ENCODE measurements at regions of chr10 and their contacts with region 1.

Region 1: GRCh38 chr10:126062131-126062981 is 166.0 kb downstream of the FANK1 start:
- DNase-seq: peak; percentile 95
- ATAC-seq: peak; percentile 66
- H3K4me3 ChIP-seq: peak overlapping the region; percentile 5; the same call in 1 of the 2 replicates
- H3K27ac ChIP-seq: peak overlapping the region; percentile 98
- H3K4me1 ChIP-seq: peaks cover 81% of the 10 kb centered on the region
- H3K27me3 ChIP-seq: no peaks in the 10 kb centered on the region
- CTCF ChIP-seq: no peak

Region 2: GRCh38 chr10:125844751-125845221 is 217.6 kb before region 1 on chr10:
- CTCF ChIA-PET with region 1: no interaction called
- POLR2A ChIA-PET with region 1: no interaction called
- intact Hi-C with region 1: no loop called
- DNase-seq: no peak
- ATAC-seq: no peak
- H3K4me3 ChIP-seq: no peak overlapping the region
- H3K27ac ChIP-seq: no peak overlapping the region
- H3K4me1 ChIP-seq: peaks cover 17% of the 10 kb centered on the region
- H3K27me3 ChIP-seq: no peaks in the 10 kb centered on the region
- CTCF ChIP-seq: no peak

Region 3: GRCh38 chr10:126013489-126014281 is 48.7 kb before region 1 on chr10:
- CTCF ChIA-PET with region 1: no interaction called
- POLR2A ChIA-PET with region 1: no interaction called
- intact Hi-C with region 1: loop called (anchors 2 kb)
- DNase-seq: peak; percentile 80
- ATAC-seq: peak; percentile 92
- H3K4me3 ChIP-seq: peak overlapping the region; percentile 43
- H3K27ac ChIP-seq: peak overlapping the region; percentile 98
- H3K4me1 ChIP-seq: peaks cover 32% of the 10 kb centered on the region
- H3K27me3 ChIP-seq: no peaks in the 10 kb centered on the region
- CTCF ChIP-seq: peak; percentile 27; the same call in 1 of the 2 replicates